Astrocyte of the cerebellum (primary cell): ENCODE measurements at regions of chr5 and their contacts with region 1.

Region 1: GRCh38 chr5:173757403-173758209 is 130.5 kb upstream of the CPEB4 start:
- DNase-seq: no peak
- H3K4me3 ChIP-seq: no peak overlapping the region
- CTCF ChIP-seq: no peak

Region 2: GRCh38 chr5:173659423-173659822 is 98.2 kb before region 1 on chr5:
- in situ Hi-C with region 1: loop called (anchors 5 kb)
- DNase-seq: no peak
- H3K4me3 ChIP-seq: no peak overlapping the region
- CTCF ChIP-seq: no peak

Region 3: DNA sequence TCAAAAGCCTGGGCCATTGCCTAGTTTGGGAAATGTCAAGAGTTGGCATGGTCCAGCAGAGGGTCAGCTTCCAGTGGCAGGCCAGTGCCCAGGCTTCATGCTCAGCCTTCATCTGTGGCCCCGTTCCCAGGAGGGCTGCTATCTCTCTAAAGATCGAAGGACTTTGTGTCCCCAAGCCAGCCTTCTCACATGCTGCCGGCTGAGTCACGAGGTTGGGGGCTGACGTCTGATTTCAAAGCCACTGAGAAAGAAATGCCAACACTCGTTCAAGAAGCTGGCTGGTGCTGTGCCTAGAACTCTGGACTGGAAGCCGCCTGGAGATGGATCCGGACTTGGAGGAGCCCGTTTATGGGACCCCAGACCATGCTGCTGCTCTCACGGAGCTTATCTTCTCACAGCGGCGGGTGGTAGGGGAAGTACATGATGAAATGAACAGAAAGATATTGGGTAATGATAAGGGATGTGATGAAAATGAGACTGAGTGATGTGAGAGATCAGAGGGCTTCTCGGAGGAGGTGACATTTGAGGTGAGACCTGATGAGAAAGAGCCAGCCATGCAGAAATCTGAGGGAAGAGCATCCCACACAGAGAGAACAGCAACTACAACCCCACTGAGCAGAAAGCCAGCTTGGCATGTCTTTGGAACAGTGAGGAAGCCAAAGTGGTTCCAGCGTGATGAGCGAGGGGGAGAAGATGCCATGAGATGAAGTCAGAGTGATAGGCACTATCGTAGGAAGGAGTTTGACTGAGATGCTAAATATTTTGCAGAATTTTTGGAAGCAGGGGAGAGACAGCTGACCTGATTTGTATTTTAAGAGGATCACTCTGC is 86.3 kb before region 1 on chr5:
- in situ Hi-C with region 1: no loop called
- DNase-seq: no peak
- H3K4me3 ChIP-seq: no peak overlapping the region
- CTCF ChIP-seq: no peak

Region 4: GRCh38 chr5:173840111-173840983 is 82.7 kb after region 1 on chr5:
- in situ Hi-C with region 1: loop called (anchors 5 kb)
- DNase-seq: no peak
- H3K4me3 ChIP-seq: no peak overlapping the region
- CTCF ChIP-seq: no peak

Region 5: GRCh38 chr5:173868076-173868880 is 110.7 kb after region 1 on chr5:
- in situ Hi-C with region 1: no loop called
- DNase-seq: peak; percentile 32
- H3K4me3 ChIP-seq: no peak overlapping the region
- CTCF ChIP-seq: no peak